ENCODE measurements at regions of chr11 and their contacts with region 1.

Region 1: DNA sequence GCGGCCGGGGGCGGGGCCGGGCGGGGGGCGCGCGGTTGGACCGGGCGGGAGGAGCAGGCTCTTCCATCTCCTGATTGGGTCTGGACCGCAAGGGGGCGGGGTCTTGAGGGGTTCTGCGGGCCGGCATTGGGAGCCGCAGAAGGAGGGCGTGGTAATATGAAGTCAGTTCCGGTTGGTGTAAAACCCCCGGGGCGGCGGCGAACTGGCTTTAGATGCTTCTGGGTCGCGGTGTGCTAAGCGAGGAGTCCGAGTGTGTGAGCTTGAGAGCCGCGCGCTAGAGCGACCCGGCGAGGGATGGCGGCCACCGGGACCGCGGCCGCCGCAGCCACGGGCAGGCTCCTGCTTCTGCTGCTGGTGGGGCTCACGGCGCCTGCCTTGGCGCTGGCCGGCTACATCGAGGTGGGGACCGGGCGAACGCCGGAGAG is at the start of gene APLP2:
- DNase-seq: peak; percentile 99
- H3K4me3 ChIP-seq: peak within 1 kb of the TSS; percentile 89
- H3K27ac ChIP-seq: peak within 1 kb of the TSS; percentile 99
- H3K4me1 ChIP-seq: peaks cover 38% of the 10 kb centered on the region
- H3K27me3 ChIP-seq: no peaks in the 10 kb centered on the region
- CTCF ChIP-seq: no peak
- total RNA-seq, gene APLP2: 325 TPM

Region 2: DNA sequence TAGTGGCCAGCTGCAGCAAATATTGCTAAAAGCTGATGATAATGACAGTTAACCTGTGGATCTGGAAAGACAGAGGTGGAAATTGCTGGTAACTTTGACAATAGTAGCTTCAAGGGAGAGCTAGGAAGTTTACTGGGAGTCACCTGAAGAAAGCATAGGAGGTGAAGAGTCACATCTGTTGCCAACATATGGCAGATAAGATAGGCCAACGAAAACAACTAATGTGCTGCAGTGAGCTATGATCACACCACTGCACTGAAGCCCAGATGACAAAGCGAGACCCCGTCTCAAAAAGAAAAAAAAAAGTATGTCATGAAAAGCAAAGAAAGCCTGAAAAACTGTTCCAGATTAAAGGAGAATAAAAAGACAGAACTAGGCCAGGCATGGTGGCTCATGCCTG is 62.8 kb before region 1 on chr11:
- intact Hi-C with region 1: loop called (anchors 5 kb)
- DNase-seq: no peak
- H3K4me3 ChIP-seq: no peak overlapping the region
- H3K27ac ChIP-seq: no peak overlapping the region
- H3K4me1 ChIP-seq: peaks cover 14% of the 10 kb centered on the region
- H3K27me3 ChIP-seq: no peaks in the 10 kb centered on the region
- CTCF ChIP-seq: no peak

Measured in left ventricle myocardium inferior (tissue), 1 donor.